Activated B cell treated with CpG ODN at 0.5 μM for 24 hours (primary cell): ENCODE measurements at regions of chr17 and their contacts with region 1.

Region 1: DNA sequence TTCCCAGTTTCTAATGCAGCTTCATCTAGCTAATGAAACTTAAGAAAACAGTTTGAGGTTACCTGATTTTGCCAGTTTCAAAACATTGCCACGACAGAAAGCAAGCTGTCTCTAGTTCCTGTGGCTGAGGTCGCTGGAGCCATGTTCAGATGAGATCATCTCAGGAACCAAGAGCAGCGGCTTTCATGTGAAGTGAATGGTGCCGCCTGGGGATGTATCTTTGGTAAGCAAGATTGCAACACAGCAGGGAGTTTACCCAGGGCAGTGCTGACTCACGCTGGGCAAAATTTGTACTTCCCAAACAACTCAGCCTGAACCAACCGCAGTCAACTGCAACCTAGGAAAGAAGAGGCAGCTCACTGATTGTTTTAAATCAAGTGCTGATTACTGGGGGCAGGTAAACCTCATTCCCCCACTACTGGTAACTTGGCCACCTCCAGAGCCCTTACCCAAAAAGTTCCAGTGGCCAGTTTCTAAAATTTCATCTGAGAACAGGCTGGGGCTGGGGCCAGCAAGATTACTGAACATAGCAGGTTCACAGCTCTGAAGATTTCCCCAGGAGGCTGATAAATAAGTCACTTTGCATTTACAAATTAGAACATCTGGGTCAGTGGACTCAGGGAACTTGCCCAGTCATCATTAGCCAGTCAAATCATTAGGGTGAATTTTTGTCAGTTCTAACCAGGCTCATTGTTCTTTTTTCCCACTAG is at the start of gene RFFL:
- DNase-seq: peak; percentile 54
- ATAC-seq: peak; percentile 96
- H3K4me3 Mint-ChIP-seq: peak within 1 kb of the TSS; percentile 79
- H3K27ac Mint-ChIP-seq: peak within 1 kb of the TSS; percentile 92
- H3K4me1 Mint-ChIP-seq: peaks cover 32% of the 10 kb centered on the region
- H3K27me3 Mint-ChIP-seq: no peaks in the 10 kb centered on the region
- CTCF ChIP-seq: no peak
- total RNA-seq, gene RFFL: 31.5 and 34.1 TPM in 2 replicates

Region 2: GRCh38 chr17:34781571-34782108 is 282.0 kb before region 1 on chr17:
- CTCF ChIA-PET with region 1: no interaction called
- POLR2A ChIA-PET with region 1: no interaction called
- intact Hi-C with region 1: no loop called
- DNase-seq: no peak
- ATAC-seq: no peak
- H3K4me3 Mint-ChIP-seq: no peak overlapping the region
- H3K27ac Mint-ChIP-seq: no peak overlapping the region
- H3K4me1 Mint-ChIP-seq: no peaks in the 10 kb centered on the region
- H3K27me3 Mint-ChIP-seq: peaks cover 2% of the 10 kb centered on the region
- CTCF ChIP-seq: no peak

Region 3: DNA sequence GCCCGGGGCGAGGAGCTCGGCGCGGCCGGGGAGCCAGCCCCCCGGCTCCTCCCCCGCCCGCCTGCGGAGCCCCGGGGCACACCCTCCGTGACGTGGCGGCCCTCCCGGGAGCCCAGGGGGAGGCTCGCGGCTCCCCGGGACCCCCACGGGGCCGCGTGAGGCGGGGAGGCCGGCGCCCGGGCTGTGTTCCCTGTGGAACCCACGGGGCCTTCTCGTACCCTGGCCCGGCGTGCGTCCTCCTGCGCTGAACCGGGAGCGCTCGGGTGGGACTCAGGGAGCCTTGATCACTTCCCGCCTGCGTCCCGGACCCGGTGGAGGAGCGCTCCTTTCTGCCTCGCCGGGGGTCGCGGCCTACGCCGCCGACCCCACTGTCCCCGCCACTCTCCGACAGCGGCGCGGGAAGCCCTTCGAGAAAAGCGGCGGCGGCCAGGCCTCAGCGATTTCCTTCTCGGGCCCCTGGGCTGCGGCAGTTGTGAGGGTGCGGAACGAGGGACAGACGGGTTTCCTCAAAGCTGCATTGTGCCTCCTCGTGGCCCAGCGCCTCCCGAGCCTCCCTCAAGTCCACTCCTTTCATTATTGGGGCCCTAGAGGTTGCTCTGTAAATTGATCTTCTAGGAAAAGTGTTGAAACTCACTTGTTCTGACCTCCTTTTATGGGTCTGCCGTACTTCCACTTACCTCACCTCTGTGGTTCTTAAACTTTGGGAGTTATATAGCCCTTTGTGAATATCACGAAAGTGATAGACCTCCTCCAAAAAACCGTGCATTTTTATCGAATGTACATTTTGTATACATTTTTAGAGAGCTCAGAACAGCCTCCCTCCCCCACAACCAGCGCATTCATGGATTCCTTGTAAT is 82.8 kb before region 1 on chr17:
- CTCF ChIA-PET with region 1: no interaction called
- POLR2A ChIA-PET with region 1: interaction called, 9 read pairs
- intact Hi-C with region 1: loop called (anchors 1 kb)
- DNase-seq: peak; percentile 92
- ATAC-seq: peak; percentile 91
- H3K4me3 Mint-ChIP-seq: peak overlapping the region; percentile 88
- H3K27ac Mint-ChIP-seq: peak overlapping the region; percentile 87
- H3K4me1 Mint-ChIP-seq: peaks cover 32% of the 10 kb centered on the region
- H3K27me3 Mint-ChIP-seq: no peaks in the 10 kb centered on the region
- CTCF ChIP-seq: no peak

Region 4: DNA sequence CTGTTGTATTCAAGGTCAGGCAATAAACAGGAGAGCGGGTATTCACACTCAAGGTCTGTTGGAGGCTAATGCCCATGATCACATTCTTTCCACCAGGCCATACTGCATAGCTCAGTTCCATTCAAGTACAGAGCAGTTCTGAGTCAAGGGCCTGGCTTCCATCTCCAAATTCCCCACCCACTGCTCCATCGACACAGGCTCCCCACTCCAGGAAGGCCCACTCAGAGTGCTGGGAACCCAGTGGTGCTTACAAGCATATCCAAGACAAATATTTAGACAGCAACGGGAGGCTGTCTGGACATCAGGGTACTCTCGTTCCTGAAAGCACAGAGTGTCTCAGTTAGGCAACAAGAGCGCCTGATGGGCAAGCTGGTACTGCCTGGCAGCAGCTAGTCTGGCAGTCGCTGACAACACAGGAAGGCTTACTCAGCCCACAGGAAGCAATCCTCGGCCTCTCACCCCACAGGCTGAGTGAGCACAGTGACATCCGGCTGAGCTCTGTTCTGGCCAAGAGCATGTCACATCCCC is 41.1 kb before region 1 on chr17:
- CTCF ChIA-PET with region 1: interaction called, 4 read pairs
- POLR2A ChIA-PET with region 1: interaction called, 3 read pairs
- intact Hi-C with region 1: loop called (anchors 5 kb)
- DNase-seq: peak; percentile 25
- ATAC-seq: peak; percentile 99
- H3K4me3 Mint-ChIP-seq: no peak overlapping the region
- H3K27ac Mint-ChIP-seq: peak overlapping the region; percentile 61
- H3K4me1 Mint-ChIP-seq: peaks cover 12% of the 10 kb centered on the region
- H3K27me3 Mint-ChIP-seq: no peaks in the 10 kb centered on the region
- CTCF ChIP-seq: no peak

Region 5: DNA sequence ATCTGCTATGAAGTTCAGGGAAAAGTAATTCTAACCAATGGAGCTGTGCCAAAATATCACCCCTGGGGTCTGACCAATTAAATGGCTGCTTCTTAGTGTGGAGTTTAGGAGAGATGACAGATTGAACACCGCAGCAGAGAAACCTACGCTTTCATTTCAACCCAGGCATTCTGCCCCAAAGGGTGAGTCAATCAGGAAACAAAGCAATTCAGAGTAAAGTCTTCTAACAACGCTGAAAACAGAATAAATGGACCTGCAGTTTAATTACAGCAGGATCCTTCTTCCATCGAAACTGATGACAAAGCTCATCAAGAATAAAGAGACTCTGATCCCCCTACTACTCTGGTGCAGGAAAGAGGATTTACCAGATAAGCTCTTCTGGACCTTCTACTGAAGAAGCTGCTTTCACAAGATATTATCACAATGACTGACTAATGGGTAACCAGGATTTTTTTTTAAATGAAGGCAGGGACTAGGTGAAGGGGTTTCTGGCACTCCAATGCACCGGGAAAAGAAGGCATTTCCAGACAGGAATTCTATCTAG is 16.9 kb before region 1 on chr17:
- CTCF ChIA-PET with region 1: no interaction called
- POLR2A ChIA-PET with region 1: interaction called, 18 read pairs
- intact Hi-C with region 1: loop called (anchors 1 kb)
- DNase-seq: no peak
- ATAC-seq: peak; percentile 78
- H3K4me3 Mint-ChIP-seq: peak overlapping the region; percentile 58
- H3K27ac Mint-ChIP-seq: peak overlapping the region; percentile 78
- H3K4me1 Mint-ChIP-seq: peaks cover 63% of the 10 kb centered on the region
- H3K27me3 Mint-ChIP-seq: no peaks in the 10 kb centered on the region
- CTCF ChIP-seq: no peak